Activated naive CD4-positive, alpha-beta T cell treated with anti-CD3 and anti-CD28 coated beads for 36 hours (primary cell): ENCODE measurements at regions of chr2 and their contacts with region 1.

Region 1: GRCh38 chr2:73385595-73386341 is at the start of gene ALMS1:
- DNase-seq: peak; percentile 91
- H3K4me3 Mint-ChIP-seq: peak within 1 kb of the TSS; percentile 92
- H3K27ac Mint-ChIP-seq: peak within 1 kb of the TSS; percentile 86
- H3K4me1 Mint-ChIP-seq: peaks cover 28% of the 10 kb centered on the region
- H3K27me3 Mint-ChIP-seq: no peaks in the 10 kb centered on the region
- total RNA-seq, gene ALMS1: 15.4 to 15.8 TPM

Region 2: GRCh38 chr2:72887754-72888437 is 497.9 kb before region 1 on chr2:
- CTCF ChIA-PET with region 1: no interaction called
- intact Hi-C with region 1: no loop called
- DNase-seq: peak; percentile 76
- H3K4me3 Mint-ChIP-seq: peak overlapping the region; percentile 76
- H3K27ac Mint-ChIP-seq: no peak overlapping the region
- H3K4me1 Mint-ChIP-seq: peaks cover 6% of the 10 kb centered on the region
- H3K27me3 Mint-ChIP-seq: peaks cover 63% of the 10 kb centered on the region

Region 3: GRCh38 chr2:73212448-73213176 is 173.2 kb before region 1 on chr2:
- CTCF ChIA-PET with region 1: no interaction called
- intact Hi-C with region 1: loop called (anchors 1 kb)
- DNase-seq: peak; percentile 85
- H3K4me3 Mint-ChIP-seq: no peak overlapping the region
- H3K27ac Mint-ChIP-seq: no peak overlapping the region
- H3K4me1 Mint-ChIP-seq: peaks cover 29% of the 10 kb centered on the region
- H3K27me3 Mint-ChIP-seq: peaks cover 3% of the 10 kb centered on the region

Region 4: DNA sequence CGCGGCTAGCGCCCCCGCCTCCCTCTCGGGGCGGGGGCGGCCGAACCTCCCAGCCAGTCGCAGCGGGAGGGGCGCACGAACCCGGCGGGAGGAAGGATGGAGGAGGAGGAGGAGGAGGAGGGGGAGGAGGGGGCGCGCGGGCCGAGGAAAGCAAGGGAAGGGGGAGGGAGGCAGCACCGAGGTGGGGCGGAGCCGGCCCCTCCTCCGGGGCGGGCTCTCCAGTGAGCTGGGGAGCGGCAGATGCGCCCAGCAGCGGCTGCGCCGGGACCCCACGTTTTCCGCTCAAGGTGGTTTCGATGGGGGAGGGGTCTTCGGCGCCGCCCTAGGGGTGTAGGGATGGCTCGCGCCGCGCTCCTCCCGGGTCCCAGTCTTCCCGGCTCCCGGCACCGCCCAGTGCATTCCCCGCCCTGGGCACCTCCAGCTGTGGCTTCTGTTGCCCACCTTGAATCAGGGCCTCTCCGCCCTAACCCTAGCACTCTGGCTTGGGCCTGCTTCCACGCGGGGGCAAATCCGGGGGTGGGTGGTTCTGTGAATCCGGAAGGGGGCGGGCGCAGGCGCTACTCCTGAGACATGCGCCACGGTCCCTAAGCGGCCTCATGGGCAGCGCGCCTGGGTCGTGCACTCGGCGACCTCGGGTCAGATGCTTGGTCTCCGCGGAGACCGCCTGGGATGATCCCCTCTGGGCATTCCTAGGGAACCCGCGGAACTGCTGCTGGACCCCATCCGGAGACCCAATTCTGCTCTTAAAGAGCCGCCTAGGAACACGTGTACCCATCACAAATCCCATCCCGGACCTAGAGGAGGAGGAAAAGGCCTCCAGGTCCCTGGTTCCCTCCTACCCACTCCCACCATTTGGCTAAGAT is 101.2 kb before region 1 on chr2 and contains the start of gene FBXO41:
- CTCF ChIA-PET with region 1: interaction called, 4 read pairs
- intact Hi-C with region 1: loop called (anchors 1 kb)
- DNase-seq: peak; percentile 65
- H3K4me3 Mint-ChIP-seq: peak within 1 kb of the TSS; percentile 80
- H3K27ac Mint-ChIP-seq: peak within 1 kb of the TSS; percentile 53
- H3K4me1 Mint-ChIP-seq: peaks cover 11% of the 10 kb centered on the region
- H3K27me3 Mint-ChIP-seq: peaks cover 14% of the 10 kb centered on the region
- total RNA-seq, gene FBXO41: 11.0 to 11.8 TPM

Region 5: DNA sequence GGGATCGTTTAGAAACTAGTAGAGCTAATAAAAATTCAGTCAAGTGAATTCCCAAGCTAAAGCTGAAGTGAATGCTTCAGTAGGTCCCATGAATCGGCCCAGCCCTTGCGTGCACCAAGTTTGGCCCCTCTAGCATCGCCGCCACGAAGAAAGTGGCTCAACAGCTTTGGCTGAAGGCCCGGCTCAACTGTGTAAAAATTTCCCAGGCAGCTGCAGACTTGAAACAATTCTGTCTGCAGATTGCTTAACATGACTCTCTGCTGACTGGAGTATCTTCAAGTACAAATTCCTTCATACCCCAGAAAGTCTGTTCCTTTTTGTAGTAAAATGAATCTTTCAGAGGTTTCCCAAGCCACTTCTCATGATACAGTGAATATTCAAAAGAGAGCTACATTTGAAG is 32.6 kb after region 1 on chr2:
- CTCF ChIA-PET with region 1: no interaction called
- intact Hi-C with region 1: no loop called
- DNase-seq: no peak
- H3K4me3 Mint-ChIP-seq: no peak overlapping the region
- H3K27ac Mint-ChIP-seq: no peak overlapping the region
- H3K4me1 Mint-ChIP-seq: peaks cover 7% of the 10 kb centered on the region
- H3K27me3 Mint-ChIP-seq: no peaks in the 10 kb centered on the region

Region 6: DNA sequence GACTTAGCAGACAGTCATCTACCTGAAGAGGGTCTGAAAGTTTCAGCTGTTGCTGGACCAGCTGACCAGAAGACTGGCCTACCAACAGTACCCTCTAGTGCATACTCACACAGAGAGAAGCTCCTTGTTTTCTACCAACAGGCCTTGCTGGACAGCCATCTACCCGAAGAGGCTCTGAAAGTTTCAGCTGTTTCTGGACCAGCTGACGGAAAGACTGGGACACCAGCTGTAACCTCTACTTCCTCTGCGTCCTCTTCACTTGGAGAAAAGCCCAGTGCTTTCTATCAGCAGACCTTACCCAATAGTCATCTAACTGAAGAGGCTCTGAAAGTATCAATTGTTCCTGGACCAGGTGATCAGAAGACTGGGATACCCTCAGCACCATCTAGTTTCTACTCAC is 63.1 kb after region 1 on chr2:
- CTCF ChIA-PET with region 1: no interaction called
- intact Hi-C with region 1: no loop called
- DNase-seq: no peak
- H3K4me3 Mint-ChIP-seq: no peak overlapping the region
- H3K27ac Mint-ChIP-seq: no peak overlapping the region
- H3K4me1 Mint-ChIP-seq: no peaks in the 10 kb centered on the region
- H3K27me3 Mint-ChIP-seq: no peaks in the 10 kb centered on the region

Region 7: DNA sequence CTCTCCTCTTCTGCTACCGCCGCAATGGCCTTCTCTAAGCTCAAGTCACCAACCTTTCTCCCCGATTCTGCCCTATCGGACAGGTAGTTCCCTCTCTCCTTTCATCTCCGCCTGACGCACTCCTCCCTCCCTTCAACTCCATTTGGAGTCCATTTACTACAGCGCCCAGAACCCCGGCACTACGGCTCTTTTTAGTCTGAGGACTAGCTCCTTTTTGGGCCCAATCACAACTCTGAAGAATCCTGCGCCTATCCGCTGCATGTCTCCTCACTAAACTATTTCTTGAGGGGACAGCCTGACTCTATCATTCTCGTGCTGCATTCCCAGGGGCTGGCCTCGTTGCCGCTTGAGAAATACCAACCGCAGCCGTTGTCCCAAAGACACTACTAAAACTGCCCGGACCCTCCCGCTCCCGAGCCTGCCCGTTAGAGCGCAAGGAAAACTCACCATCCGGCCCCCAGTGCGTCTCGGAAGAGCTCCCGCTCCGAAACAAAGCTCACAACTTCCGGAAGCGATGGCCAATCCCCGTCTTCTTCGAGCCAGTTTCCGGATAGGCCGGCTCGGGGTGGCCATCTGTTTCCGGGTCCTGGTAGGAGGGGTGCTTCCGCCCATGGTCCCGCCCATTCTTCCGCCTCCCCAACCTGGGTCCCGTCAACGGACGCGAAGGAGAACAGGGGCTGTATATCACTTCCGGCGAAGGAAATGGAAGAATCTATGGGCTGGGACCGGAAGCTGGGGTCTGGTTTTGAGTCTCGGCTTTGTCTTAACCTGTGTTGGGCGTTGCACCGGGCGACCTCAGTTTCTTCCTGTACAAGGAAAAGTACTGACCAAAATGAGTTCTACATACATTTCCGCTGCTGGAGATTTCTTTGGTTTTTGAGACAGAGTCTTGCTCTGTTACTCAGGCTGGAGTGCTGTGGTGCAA is 351.3 kb after region 1 on chr2 and contains the start of gene TPRKB:
- CTCF ChIA-PET with region 1: no interaction called
- intact Hi-C with region 1: loop called (anchors 1 kb)
- DNase-seq: peak; percentile 99
- H3K4me3 Mint-ChIP-seq: peak within 1 kb of the TSS; percentile 88
- H3K27ac Mint-ChIP-seq: peak within 1 kb of the TSS; percentile 76
- H3K4me1 Mint-ChIP-seq: peaks cover 15% of the 10 kb centered on the region
- H3K27me3 Mint-ChIP-seq: no peaks in the 10 kb centered on the region
- total RNA-seq, gene TPRKB: 30.5 to 32.5 TPM

Region 8: GRCh38 chr2:74653985-74654882 is 1268.5 kb after region 1 on chr2 and contains the start of gene SEMA4F:
- CTCF ChIA-PET with region 1: no interaction called
- intact Hi-C with region 1: loop called (anchors 2 kb)
- DNase-seq: peak; percentile 97
- H3K4me3 Mint-ChIP-seq: peak within 1 kb of the TSS; percentile 72
- H3K27ac Mint-ChIP-seq: peak within 1 kb of the TSS; percentile 33
- H3K4me1 Mint-ChIP-seq: peaks cover 11% of the 10 kb centered on the region
- H3K27me3 Mint-ChIP-seq: peaks cover under 1% of the 10 kb centered on the region
- total RNA-seq, gene SEMA4F: 4.3 to 5.3 TPM